Sigmoid colon (tissue), 7 donors: ENCODE measurements at regions of chr2 and their contacts with region 1.

Region 1: DNA sequence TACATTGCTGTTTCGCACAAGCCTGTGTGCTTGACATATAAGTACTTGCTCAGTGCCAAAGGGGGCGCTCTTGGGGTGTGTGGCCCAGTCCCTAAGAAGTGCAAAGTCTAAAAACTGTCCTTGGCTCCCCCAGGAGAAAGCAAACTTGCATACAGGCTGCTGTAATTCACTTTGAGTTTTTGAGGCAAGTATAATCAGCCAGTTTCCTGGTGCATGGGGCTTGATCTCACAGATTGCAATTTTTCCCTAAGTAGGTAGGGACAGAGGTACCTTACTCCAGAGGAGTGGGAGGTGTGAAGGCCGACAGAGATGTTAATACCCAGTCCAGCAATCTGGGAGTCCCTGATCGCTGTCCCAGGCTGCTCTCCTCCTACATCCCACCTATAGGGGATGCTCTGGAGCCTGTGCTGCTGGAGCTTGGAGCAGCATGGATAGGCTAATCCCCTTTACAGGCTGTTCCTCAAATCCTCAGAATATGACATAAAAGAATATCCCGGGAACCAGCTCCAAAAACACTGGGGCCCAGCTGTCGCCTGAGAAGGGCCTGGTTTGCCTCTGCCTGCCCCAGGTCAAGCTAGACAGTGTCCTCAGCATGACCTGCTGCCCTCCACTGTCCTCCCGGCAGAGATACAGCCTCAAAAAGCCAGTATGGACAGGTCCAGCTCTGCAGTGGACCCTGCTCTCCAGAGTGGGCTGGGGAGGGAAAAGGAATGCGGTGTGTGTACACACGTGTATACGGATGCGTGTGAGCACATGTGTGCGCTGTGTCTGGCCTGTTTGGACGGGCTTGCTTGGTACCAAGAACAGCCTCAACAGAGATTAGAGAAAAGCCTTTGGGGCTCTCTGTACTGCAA is 136.5 kb upstream of the HAAO start:
- DNase-seq: no peak
- H3K4me3 ChIP-seq: no peak overlapping the region
- H3K27ac ChIP-seq: peak overlapping the region; percentile 86 to 95 (median 91)
- H3K4me1 ChIP-seq: peaks cover 0 to 88% (median 85%) of the 10 kb centered on the region in 4 donors
- H3K27me3 ChIP-seq: no peaks in the 10 kb centered on the region
- CTCF ChIP-seq: peak in 1 of 4 experiments; percentile 23
- EP300 ChIP-seq: no peak
- POLR2A ChIP-seq: no peak

Region 2: DNA sequence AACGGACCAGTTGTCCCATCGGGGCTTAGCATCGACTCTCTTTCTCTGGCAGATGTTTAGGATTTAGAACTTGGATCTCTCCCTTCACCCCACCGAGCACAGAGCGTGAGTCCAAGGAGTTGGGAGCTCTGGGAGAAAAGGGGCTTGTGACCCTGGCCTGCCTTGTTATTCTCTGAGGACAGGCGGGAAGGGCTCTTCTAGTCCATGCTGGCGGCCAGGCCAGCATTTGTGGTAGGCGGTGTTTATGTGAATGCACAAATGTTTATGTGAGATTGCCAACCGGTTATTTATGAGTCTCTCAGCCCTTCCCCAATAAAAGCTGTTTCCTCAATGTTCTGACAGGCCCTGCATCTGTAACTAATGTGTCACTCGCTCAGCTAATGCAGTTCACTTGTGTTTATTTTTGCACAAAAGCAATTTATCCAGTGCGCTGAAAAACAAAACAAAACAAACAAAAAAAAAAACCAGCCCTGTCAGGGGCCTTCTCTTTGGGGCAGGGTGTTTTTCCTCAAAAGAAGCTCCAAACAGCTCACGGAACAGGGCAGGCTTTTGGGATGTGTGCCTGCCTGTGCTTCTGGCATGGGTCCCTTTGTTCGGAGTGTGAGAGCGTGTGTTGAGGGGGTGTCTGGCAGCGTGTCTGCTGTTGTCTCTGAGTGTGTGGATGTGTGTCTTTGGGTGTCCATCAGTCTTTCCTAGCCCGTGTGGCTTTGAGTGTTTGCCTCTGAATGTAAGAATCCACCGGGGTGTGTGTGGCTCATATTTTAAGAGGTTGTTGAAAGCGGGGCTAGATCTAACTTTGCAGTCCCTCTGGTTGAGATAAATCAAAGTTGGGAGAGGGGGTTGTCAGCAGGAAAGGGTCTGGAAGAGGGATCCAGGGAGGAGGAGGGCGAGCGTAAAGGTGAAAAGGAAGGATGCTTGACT is 83.8 kb before region 1 on chr2:
- intact Hi-C with region 1: loop called (anchors 5 kb)
- DNase-seq: peak; percentile 89
- H3K4me3 ChIP-seq: peak overlapping the region in 1 of 4 donors; percentile 3
- H3K27ac ChIP-seq: peak overlapping the region; percentile 71 to 79 (median 74)
- H3K4me1 ChIP-seq: peaks cover 0 to 55% (median 47%) of the 10 kb centered on the region in 4 donors
- H3K27me3 ChIP-seq: no peaks in the 10 kb centered on the region
- CTCF ChIP-seq: peak in 1 of 4 experiments; percentile 11
- EP300 ChIP-seq: peak in 3 of 4 donors; percentile 1 to 60 (median 45)
- POLR2A ChIP-seq: no peak

Region 3: DNA sequence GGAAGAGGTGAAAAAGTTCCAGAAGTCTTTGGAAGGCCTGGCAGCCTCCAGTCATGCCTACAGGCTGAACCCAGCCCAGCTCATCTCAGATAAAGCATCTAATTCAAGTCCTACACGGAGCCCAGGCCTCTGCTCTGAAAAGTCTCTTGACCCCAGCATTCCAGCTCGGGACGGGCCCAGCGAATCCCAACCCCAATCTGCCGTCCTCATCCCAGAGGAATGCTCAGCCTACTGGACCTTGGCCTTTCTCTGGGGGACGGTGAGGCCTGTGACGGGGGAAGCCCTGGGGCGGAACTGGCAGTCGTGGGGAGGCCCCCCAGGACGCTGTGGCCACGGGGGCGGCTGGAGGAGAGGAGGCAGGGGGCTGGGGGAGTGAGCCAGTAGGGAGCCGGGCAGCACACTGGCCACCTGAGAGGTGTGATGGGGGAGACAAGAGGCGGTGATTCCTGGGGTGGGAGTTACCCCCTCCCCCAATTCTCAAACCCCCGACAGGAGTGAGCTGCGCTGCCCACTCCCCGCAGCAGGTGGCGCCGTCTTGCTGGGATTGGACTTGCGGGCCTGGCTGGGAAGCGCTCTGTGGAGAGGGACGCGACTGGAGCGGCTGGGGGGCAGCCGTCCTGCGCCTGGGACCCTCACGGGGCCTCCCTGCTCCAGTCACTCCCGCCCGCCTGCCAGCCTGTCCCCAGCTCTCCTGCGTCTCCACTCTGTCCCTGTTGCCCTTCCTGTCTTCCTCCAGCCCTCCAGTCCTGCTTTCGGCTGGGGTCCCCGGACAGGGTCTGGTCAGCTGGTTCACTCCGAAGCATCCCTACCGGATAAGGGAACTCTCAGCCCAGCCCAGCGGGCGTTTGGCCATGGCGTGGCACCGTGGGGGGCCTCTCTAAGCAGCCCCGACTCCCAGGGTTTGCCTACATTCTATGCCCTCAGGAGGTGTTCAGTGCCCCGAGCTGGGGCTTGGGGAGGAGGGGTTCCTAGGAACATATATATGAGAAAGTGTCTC is 46.1 kb after region 1 on chr2:
- intact Hi-C with region 1: no loop called
- DNase-seq: peak; percentile 89
- H3K4me3 ChIP-seq: peak overlapping the region; percentile 9 to 49 (median 44)
- H3K27ac ChIP-seq: peak overlapping the region; percentile 26 to 71 (median 66)
- H3K4me1 ChIP-seq: peaks cover 0 to 28% (median 20%) of the 10 kb centered on the region in 4 donors
- H3K27me3 ChIP-seq: no peaks in the 10 kb centered on the region
- CTCF ChIP-seq: peak; percentile 94 to 97 (median 96)
- EP300 ChIP-seq: no peak
- POLR2A ChIP-seq: no peak

Region 4: GRCh38 chr2:43531251-43531650 is 602.3 kb after region 1 on chr2:
- intact Hi-C with region 1: no loop called
- DNase-seq: no peak
- H3K4me3 ChIP-seq: no peak overlapping the region
- H3K27ac ChIP-seq: peak overlapping the region in 2 of 4 donors; percentile 47 to 60
- H3K4me1 ChIP-seq: peaks cover 0 to 27% (median 23%) of the 10 kb centered on the region in 4 donors
- H3K27me3 ChIP-seq: no peaks in the 10 kb centered on the region
- CTCF ChIP-seq: no peak
- EP300 ChIP-seq: no peak
- POLR2A ChIP-seq: no peak